Transverse colon (tissue), 4 donors: ENCODE measurements at regions of chr14 and their contacts with region 1.

Region 1: DNA sequence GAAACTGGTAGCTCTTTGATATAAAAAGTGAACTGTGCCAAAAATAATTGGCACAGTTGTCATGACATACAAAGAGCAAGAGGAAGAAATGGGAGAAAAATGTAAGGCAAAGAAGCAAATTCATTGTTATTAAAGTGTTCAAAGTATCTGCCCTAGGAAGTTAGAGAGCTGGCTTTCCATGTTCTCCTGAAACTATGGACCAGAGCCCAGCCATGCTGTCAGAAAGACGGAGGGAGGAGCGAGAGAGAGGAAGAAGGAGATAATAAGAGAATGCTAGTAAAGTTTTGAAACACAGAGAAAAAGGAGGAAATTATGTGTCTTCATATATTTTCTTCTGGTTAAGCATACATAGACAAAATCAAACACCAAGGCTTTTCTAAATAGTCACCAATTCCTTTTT is 78.1 kb upstream of the PELI2 start:
- DNase-seq: no peak
- H3K4me3 ChIP-seq: no peak overlapping the region
- H3K27ac ChIP-seq: no peak overlapping the region
- H3K4me1 ChIP-seq: no peaks in the 10 kb centered on the region
- H3K27me3 ChIP-seq: no peaks in the 10 kb centered on the region
- CTCF ChIP-seq: no peak
- EP300 ChIP-seq: no peak
- POLR2A ChIP-seq: no peak

Region 2: DNA sequence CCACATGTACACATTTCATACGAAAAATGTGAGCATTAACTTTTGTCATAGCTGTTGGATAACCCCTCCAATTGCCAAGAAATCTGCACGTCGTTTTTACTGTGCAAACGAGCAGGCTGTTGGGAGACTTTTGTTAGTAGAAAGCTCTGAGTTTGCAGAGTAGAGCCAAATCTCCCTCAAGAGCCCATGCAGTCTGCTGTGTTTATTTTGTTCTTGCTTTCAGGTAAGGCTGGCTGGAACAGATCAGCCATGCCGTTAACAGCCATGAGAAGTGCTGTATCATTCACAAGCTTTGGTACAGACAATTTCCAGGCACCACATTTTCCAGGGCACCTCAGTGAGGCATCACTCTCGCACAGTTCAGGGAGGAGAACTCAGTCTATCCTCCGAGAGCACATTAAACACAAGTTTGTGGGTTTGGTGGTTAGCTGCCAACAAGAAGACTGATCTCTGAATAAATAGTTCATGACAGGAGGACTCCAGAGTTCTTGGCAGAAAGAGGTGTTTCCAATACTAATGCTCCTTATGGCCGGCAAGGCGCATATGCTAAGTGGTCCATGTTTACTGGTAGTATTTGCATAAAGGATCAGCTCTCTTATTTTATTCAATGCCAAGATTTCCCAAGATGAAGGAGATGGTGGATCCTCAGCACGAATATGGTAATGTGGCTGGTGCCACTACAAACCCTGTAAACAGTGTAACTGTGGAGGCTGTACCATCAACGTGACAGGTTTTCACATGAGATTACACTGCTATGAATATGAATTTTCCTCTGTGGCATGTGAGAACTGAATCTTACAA is 47.8 kb after region 1 on chr14:
- in situ Hi-C with region 1: no loop called
- intact Hi-C with region 1: loop called (anchors 1 kb)
- DNase-seq: no peak
- H3K4me3 ChIP-seq: no peak overlapping the region
- H3K27ac ChIP-seq: peak overlapping the region; percentile 40 to 66 (median 52)
- H3K4me1 ChIP-seq: peaks cover 0 to 11% (median 2%) of the 10 kb centered on the region in 4 donors
- H3K27me3 ChIP-seq: no peaks in the 10 kb centered on the region
- CTCF ChIP-seq: no peak
- EP300 ChIP-seq: no peak
- POLR2A ChIP-seq: no peak